Left lung (tissue), 14 donors: ENCODE measurements at regions of chr12 and their contacts with region 1.

Region 1: DNA sequence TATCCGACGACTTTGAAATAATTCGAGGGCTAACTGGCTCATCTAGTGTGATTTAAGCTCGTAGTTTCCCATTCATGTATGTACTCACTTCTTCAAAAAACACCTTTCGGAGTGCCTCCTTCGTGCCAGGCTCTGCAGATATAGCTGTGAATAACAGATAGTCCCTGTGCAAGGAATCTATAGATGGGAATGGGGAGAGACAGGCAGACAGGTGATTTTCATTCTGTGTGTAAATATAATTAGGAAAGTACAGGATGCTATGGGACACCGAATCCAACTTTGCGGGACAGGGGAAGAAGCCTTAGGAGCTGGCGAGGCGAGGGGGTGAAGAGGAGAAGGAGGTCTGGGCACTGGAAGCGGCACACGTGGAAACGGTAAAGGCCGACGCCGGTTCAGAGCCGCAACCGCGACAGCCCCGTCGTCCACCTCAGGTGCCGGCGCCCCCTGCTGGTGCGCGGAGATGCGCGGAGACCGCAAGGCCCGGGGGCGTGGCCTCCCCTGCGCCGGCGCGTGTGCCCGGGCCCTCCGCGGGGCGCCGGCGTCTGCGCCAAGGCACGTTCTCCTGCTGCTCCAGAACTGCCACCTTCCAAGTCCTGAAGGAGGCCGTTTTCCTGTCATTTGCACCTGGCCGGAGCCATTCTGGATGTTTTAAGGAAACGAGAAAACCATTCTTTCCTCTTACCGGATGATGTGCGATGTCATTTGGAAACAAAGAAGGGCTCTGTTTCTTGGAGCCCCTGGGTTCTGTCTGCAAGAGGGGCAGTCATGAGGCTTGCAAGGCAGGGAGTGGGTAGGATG is 18.0 kb upstream of the CACNA1C start:
- DNase-seq: peak; percentile 75 to 97 (median 90)
- ATAC-seq: peak; percentile 100
- H3K4me3 ChIP-seq: peak overlapping the region; percentile 17 to 28
- H3K27ac ChIP-seq: no peak overlapping the region
- H3K4me1 ChIP-seq: peaks cover 8 to 10% of the 10 kb centered on the region in 2 donors
- H3K27me3 ChIP-seq: peaks cover 0 to 49% of the 10 kb centered on the region in 2 donors
- CTCF ChIP-seq: peak; percentile 97 to 98

Region 2: DNA sequence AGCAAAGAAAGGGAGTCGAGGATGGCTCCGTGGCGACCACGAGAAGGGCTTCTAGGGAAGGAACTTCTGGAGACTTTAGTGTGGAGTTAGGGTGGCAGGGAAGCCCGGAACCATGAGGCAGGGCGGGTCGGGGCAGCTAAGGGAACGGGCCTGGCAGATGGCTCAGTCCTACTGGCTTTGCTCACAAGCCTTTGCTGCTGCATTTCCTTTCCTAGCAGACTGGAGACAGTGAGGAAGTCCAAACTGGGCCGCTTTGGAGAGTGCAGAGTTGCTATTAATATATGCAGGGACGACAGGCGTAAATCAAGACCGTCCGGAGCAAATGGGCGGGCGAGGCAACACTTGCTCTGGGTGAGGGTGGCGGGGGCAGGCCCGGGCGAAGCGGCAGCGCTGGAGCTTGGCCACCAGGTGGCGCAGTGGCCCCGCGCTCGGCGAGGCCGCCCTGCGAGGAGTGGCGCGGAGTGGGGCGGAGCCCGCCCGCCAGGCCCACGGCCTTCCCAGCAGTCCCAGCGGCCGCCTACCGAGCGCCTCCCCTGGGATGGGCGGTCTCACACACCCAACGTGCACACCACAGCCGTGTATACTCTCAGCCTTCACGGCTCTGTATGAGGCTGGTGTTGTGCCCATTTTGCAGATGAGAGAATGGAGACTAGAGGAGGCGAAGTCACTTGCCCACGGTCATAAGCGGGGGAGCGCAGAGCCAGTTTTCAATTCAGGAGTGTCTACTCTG is 238.9 kb before region 1 on chr12:
- intact Hi-C with region 1: loop called in 1 of 2 experiments (anchors 10 kb)
- DNase-seq: peak; percentile 87 to 100 (median 95)
- ATAC-seq: peak; percentile 97
- H3K4me3 ChIP-seq: peak overlapping the region; percentile 68 to 80
- H3K27ac ChIP-seq: peak overlapping the region; percentile 83 to 97
- H3K4me1 ChIP-seq: peaks cover 0 to 34% of the 10 kb centered on the region in 2 donors
- H3K27me3 ChIP-seq: no peaks in the 10 kb centered on the region
- CTCF ChIP-seq: peak; percentile 99 to 100

Region 3: DNA sequence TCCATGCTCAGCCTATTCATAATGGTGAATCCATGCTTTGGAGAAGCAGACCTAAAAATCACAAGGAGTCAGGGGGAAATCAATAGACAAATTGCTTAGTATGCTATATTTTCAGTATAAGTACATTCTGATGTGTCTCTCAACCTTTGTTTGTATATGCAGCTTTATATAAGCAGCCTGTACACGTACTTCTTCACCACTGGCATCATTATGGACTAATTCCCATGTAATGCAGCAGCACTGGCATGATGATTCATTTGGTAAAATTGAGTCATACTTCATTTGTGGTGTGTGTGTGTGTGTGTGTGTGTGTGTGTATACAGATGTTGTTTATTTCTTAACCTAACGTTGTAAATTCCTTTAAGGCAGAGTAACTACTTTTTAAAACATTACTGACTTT is 41.5 kb before region 1 on chr12:
- intact Hi-C with region 1: no loop called
- DNase-seq: no peak
- ATAC-seq: peak; percentile 35
- H3K4me3 ChIP-seq: no peak overlapping the region
- H3K27ac ChIP-seq: peak overlapping the region in 1 of 2 donors; percentile 57
- H3K4me1 ChIP-seq: peaks cover 0 to 13% of the 10 kb centered on the region in 2 donors
- H3K27me3 ChIP-seq: no peaks in the 10 kb centered on the region
- CTCF ChIP-seq: no peak